ENCODE measurements at regions of chr11 and their contacts with region 1.

Region 1: DNA sequence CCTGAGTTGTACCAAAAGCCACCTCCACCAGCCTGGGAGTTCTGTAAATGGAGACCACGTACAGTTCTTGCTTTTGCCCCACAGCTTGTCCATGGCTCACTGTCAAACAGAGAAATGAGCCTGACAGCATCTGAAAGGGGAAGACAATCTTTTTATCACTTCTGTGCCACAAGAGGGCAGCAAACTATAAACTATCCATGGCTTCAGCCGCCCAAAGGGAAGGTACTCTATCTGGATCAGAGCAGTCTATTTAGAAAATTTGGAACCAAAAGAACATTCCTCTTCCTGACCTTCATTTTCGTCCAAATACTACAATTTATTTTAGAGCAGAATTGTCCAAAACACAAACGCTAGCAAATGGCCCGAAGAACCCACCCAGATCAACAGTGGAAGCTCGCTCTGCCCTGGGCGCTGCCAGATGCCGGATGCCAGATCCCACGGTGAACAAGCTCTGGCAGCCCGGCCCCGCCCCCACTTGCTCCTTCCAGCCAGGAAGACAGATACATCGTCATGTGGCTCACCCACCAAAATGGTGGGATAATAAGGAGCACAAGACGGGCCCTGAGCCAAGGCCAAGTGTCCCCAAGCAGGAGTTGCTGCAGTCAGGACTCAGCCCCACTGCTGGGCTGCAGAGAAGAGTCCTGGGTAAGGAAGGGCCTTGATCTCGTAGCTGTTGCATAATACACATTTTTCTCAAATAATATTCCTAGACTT is 23.9 kb upstream of the SCGB1A1 start:
- DNase-seq: peak; percentile 63 to 84 (median 73)
- H3K4me3 ChIP-seq: peak overlapping the region in 56 of 59 donors; percentile 7 to 65 (median 44)
- H3K27ac ChIP-seq: peak overlapping the region in 58 of 59 donors; percentile 3 to 93 (median 77)
- H3K27me3 ChIP-seq: no peaks in the 10 kb centered on the region
- CTCF ChIP-seq: peak; percentile 65 to 94 (median 83)

Region 2: GRCh38 chr11:62306227-62306626 is 88.8 kb before region 1 on chr11:
- intact Hi-C with region 1: no loop called
- DNase-seq: no peak
- H3K4me3 ChIP-seq: no peak overlapping the region
- H3K27ac ChIP-seq: no peak overlapping the region
- H3K27me3 ChIP-seq: peaks cover 0 to 9% (median 0%) of the 10 kb centered on the region in 45 donors
- CTCF ChIP-seq: no peak

Region 3: DNA sequence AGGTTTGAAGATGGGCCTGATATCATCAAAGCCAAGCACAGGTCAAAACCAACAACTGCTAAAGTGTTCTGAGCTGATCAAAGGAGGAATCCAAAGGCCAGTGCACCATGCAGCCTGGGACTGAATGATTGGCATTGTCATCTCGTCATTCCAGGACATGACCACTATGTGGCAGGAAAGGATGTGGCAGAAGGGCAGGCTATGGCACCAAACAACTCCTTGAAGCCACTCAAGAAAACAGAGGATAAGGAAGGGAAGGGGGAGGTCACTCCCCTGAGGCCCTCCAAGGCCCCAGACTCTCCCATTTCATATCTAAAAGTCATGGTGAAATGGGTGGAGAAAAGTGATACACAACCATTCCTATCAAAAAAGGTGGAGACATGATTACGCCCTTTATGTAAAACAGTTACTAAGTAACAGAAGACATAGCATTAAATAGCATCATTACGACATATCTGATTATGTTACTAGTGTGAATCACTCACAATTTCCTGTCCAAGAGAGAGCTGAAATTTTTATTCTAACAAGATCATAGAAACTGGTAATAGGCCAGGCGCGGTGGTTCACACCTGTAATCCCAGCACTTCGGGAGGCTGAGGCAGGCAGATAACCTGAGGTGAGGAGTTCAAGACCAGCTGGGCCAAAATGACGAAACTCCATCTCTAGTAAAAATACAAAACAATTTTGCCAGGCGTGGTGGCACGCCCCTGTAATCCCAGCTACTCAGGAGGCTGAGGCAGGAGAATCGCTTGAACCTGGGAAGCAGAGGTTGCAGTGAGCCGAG is 102.3 kb after region 1 on chr11:
- intact Hi-C with region 1: loop called in 1 of 2 experiments (anchors 5 kb)
- DNase-seq: peak in 6 of 10 donors; percentile 11 to 67 (median 54)
- H3K4me3 ChIP-seq: no peak overlapping the region
- H3K27ac ChIP-seq: no peak overlapping the region
- H3K27me3 ChIP-seq: peaks cover 0 to 20% (median 0%) of the 10 kb centered on the region in 45 donors
- CTCF ChIP-seq: peak in 54 of 56 donors; percentile 11 to 84 (median 60)

Region 4: DNA sequence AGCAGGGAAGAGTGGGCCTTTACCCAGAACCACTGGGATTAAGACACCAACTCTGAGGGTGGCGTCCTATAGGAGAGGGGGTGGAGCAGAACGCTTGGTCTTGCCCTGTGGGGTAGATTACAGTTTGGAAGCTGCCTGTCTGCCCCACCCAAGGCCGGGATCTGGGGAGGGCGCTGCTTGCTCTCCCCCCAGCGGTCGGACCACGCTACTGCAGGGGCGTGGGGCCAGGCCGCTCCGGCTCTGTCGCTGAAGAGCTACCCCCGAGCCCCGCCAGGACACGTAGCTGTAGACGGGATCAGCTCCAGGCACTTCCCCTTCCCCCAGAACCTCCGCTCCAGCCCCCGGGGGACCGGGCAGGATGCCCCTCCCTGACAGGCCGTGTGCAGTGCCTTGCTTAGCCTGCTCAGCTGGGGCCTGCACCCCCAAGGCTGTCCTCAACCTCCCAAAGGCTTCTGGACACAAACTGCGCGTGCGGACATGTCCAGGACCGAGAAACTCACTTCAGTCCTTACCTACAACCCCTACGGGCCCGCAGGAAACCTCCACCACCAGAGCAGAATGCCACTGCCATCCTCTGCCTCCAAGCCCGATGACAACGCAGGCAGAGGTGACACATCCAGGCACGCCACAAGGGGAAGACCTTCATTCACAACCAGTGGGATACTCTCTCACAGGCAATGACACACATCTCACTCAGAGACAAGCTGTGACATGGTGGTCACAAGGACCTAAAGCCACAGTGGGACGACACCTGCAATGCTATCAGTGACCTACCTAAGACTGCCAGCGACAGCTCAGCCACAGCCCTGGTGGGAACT is 148.0 kb after region 1 on chr11:
- intact Hi-C with region 1: loop called (anchors 2 to 10 kb)
- DNase-seq: peak in 7 of 10 donors; percentile 38 to 82 (median 60)
- H3K4me3 ChIP-seq: peak overlapping the region in 51 of 59 donors; percentile 1 to 79 (median 65)
- H3K27ac ChIP-seq: peak overlapping the region in 54 of 59 donors; percentile 2 to 92 (median 69)
- H3K27me3 ChIP-seq: peaks cover 0 to 39% (median 27%) of the 10 kb centered on the region in 45 donors
- CTCF ChIP-seq: peak; percentile 75 to 100 (median 97)

Region 5: GRCh38 chr11:62556108-62556871 is 161.3 kb after region 1 on chr11:
- intact Hi-C with region 1: loop called in 1 of 2 experiments (anchors 5 kb)
- DNase-seq: peak in 9 of 10 donors; percentile 62 to 87 (median 80)
- H3K4me3 ChIP-seq: peak overlapping the region in 14 of 59 donors; percentile 2 to 33 (median 12)
- H3K27ac ChIP-seq: peak overlapping the region in 54 of 59 donors; percentile 1 to 86 (median 69)
- H3K27me3 ChIP-seq: no peaks in the 10 kb centered on the region
- CTCF ChIP-seq: no peak

Region 6: DNA sequence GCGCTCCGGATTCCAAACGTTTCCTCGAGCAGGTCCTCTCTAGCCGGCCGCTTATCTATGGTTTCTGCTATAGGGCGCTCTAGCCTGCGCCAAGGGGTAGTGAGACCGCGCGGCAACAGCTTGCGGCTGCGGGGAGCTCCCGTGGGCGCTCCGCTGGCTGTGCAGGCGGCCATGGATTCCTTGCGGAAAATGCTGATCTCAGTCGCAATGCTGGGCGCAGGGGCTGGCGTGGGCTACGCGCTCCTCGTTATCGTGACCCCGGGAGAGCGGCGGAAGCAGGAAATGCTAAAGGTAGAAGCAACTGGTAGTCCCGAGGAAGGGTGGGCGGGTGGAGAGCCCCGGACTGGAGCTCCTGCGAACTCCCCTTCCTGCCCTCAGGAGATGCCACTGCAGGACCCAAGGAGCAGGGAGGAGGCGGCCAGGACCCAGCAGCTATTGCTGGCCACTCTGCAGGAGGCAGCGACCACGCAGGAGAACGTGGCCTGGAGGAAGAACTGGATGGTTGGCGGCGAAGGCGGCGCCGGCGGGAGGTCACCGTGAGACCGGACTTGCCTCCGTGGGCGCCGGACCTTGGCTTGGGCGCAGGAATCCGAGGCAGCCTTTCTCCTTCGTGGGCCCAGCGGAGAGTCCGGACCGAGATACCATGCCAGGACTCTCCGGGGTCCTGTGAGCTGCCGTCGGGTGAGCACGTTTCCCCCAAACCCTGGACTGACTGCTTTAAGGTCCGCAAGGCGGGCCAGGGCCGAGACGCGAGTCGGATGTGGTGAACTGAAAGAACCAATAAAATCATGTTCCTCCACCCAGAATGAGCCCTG is 276.8 kb after region 1 on chr11 and contains the starts of genes LBHD1 and UQCC3:
- intact Hi-C with region 1: loop called in 1 of 2 experiments (anchors 10 kb)
- DNase-seq: peak; percentile 60 to 87 (median 83)
- H3K4me3 ChIP-seq: peak within 1 kb of the TSS; percentile 53 to 99 (median 79)
- H3K27ac ChIP-seq: peak within 1 kb of the TSS; percentile 44 to 97 (median 92)
- H3K27me3 ChIP-seq: no peaks in the 10 kb centered on the region
- CTCF ChIP-seq: peak in 23 of 56 donors; percentile 10 to 50 (median 21)
- total RNA-seq, gene LBHD1: 1.5 to 11.0 (median 4.6) TPM
- total RNA-seq, gene UQCC3: 3.8 to 9.7 (median 6.4) TPM

Region 7: DNA sequence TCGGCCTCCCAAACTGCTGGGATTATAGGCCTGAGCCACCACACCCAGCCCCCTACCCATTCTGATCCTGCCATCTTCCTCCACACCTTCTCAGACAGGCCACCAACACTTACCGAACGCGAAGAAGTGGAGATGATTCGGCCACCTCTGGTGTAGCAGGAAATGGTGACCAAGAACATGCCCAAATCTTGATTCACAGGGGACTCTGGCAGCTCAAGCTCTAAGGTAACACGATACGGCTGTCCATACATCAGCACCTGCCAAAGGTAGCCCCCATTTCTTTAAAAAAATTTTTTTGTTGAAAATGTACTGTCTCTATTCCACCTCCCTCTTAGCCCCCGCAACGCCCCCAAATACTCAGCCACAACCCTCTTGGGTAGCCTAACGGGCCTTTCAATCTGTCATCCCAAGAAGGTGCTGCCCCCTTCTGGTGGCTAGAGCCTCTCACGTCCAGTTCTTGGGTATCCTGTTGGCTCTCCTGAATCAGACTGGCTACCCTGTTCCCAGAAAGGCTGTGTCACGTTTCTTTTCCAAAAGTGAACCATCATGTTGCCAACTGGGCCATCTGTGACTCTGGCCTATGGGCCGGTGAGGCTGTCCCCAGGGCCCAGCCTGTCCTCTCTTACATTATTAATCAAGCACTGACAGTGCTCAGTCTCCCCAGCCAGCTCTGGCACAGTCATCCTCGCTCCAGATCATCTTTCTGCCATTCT is 299.6 kb after region 1 on chr11:
- intact Hi-C with region 1: loop called in 1 of 2 experiments (anchors 5 kb)
- DNase-seq: peak in 9 of 10 donors; percentile 54 to 86 (median 76)
- H3K4me3 ChIP-seq: no peak overlapping the region
- H3K27ac ChIP-seq: peak overlapping the region in 7 of 59 donors; percentile 1 to 39 (median 26)
- H3K27me3 ChIP-seq: no peaks in the 10 kb centered on the region
- CTCF ChIP-seq: peak; percentile 49 to 88 (median 77)

Region 8: GRCh38 chr11:62860835-62861563 is 466.0 kb after region 1 on chr11:
- intact Hi-C with region 1: loop called in 1 of 2 experiments (anchors 10 kb)
- DNase-seq: no peak
- H3K4me3 ChIP-seq: no peak overlapping the region
- H3K27ac ChIP-seq: peak overlapping the region in 5 of 59 donors; percentile 2 to 52 (median 35)
- H3K27me3 ChIP-seq: no peaks in the 10 kb centered on the region
- CTCF ChIP-seq: no peak